IMR-90 (cell line): ENCODE measurements at regions of chr13 and their contacts with region 1.

Region 1: DNA sequence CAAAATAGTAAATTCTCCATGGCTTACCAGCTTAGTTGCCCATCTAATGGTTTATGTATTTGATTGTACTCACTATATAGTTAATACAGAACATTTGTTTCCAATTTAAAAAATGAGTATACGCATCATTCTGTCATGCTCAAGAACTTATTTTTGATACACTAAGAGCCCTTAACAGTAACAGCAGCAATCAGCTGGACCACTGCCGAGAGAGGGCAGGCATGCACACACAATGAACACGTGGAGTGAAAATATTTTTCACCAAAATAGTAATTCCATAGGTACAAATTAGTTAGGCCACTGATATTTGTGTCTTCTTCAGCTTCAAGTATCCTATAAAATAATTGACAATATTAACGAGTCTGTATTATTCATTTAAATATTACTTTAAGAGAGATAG is 109.9 kb downstream of the KLF12 start:
- DNase-seq: no peak
- ATAC-seq: no peak
- H3K4me3 ChIP-seq: no peak overlapping the region
- H3K27ac ChIP-seq: no peak overlapping the region
- H3K4me1 ChIP-seq: no peaks in the 10 kb centered on the region
- H3K27me3 ChIP-seq: no peaks in the 10 kb centered on the region
- CTCF ChIP-seq: no peak
- POLR2A ChIP-seq: no peak
- RAD21 ChIP-seq: no peak

Region 2: DNA sequence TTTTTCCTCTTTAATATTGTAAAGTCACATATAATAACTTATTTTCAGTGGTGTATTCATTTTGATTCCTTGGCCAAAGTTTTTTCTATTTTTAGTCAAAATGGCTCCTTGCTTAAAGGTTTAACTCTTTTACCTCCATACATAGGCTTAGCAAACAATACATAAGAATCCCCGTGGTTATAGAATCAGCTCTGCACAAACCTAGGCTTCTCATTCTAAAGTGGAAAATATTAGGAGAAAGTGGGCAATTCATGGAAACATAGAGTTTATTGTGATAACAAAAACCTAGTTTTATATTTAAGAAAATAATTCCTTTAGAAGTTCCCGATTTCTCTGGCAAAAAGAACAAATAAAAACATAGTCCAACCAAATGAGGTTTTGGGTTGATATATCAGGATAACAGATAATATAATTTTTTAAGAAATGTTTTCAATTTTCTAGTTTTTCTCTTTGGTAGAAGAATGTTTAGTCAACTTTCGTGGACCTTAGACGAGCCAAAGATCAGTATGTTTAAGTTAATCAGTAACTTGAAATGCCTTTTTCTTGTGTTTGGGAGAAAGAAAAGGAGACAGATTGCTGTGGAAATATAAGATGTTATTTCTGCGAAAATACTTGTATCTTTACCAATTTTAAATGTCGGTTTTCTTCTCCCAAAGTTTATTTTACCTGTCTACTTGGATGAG is 203.3 kb after region 1 on chr13:
- CTCF ChIA-PET with region 1: no interaction called
- POLR2A ChIA-PET with region 1: interaction called, 10 read pairs
- dilution Hi-C with region 1: no loop called
- in situ Hi-C with region 1: no loop called
- intact Hi-C with region 1: no loop called
- DNase-seq: no peak
- ATAC-seq: no peak
- H3K4me3 ChIP-seq: no peak overlapping the region
- H3K27ac ChIP-seq: no peak overlapping the region
- H3K4me1 ChIP-seq: no peaks in the 10 kb centered on the region; the same call in 1 of the 2 replicates
- H3K27me3 ChIP-seq: no peaks in the 10 kb centered on the region
- CTCF ChIP-seq: no peak
- POLR2A ChIP-seq: no peak
- RAD21 ChIP-seq: no peak